ENCODE measurements at regions of chr1 and their contacts with region 1.

Region 1: GRCh38 chr1:197841883-197842553 is 60.4 kb upstream of the C1orf53 start:
- DNase-seq: no peak
- ATAC-seq: no peak
- H3K4me3 ChIP-seq: no peak overlapping the region
- H3K27ac ChIP-seq: no peak overlapping the region
- H3K4me1 ChIP-seq: no peaks in the 10 kb centered on the region
- H3K27me3 ChIP-seq: peaks cover 0 to 4% of the 10 kb centered on the region in 2 donors

Region 2: DNA sequence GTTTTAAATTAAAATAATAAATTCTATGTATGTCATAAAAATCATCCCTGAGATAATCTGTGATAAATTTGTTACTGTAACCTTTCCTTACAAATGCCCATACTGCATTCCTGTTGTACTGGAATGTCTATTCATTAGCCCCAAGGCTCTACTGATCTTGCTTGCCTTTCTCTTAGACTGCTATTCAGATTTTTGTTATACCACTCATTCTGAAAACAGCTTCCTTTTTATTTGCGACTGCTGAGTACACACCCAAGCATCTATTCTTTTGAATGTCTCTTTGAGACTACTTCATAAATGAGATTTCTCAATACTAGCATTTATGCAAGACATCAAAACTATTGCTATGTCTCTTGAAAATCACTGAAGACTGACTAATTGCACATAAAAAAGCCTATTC is 105.4 kb before region 1 on chr1:
- intact Hi-C with region 1: loop called in 1 of 2 experiments (anchors 10 kb)
- DNase-seq: no peak
- ATAC-seq: no peak
- H3K4me3 ChIP-seq: no peak overlapping the region
- H3K27ac ChIP-seq: no peak overlapping the region
- H3K4me1 ChIP-seq: no peaks in the 10 kb centered on the region
- H3K27me3 ChIP-seq: no peaks in the 10 kb centered on the region